B cell (primary cell): ENCODE measurements at regions of chr1 and their contacts with region 1.

Region 1: GRCh38 chr1:203340112-203340804 is 10.7 kb downstream of the FMOD start:
- DNase-seq: peak; percentile 82
- ATAC-seq: peak; percentile 77
- H3K4me3 ChIP-seq: no peak overlapping the region
- H3K4me3 Mint-ChIP-seq: no peak overlapping the region
- H3K27ac ChIP-seq: no peak overlapping the region
- H3K27ac Mint-ChIP-seq: peak overlapping the region; percentile 50
- H3K4me1 ChIP-seq: peaks cover 16 to 25% of the 10 kb centered on the region in 2 donors
- H3K4me1 Mint-ChIP-seq: peaks cover 24% of the 10 kb centered on the region
- H3K27me3 ChIP-seq: peaks cover 0 to 13% (median 1%) of the 10 kb centered on the region in 4 experiments
- H3K27me3 Mint-ChIP-seq: peaks cover 28% of the 10 kb centered on the region
- CTCF ChIP-seq: peak; percentile 95

Region 2: GRCh38 chr1:203267347-203267846 is 72.9 kb before region 1 on chr1:
- CTCF ChIA-PET with region 1: interaction called, 1,776 read pairs
- POLR2A ChIA-PET with region 1: interaction called, 14 read pairs
- intact Hi-C with region 1: loop called (anchors 1 kb)
- DNase-seq: peak; percentile 92
- ATAC-seq: peak; percentile 63
- H3K4me3 ChIP-seq: peak overlapping the region; percentile 58 to 77 (median 65)
- H3K4me3 Mint-ChIP-seq: peak overlapping the region; percentile 89
- H3K27ac ChIP-seq: peak overlapping the region; percentile 45 to 58
- H3K27ac Mint-ChIP-seq: peak overlapping the region; percentile 76
- H3K4me1 ChIP-seq: peaks cover 30 to 40% of the 10 kb centered on the region in 2 donors
- H3K4me1 Mint-ChIP-seq: peaks cover 32% of the 10 kb centered on the region
- H3K27me3 ChIP-seq: no peaks in the 10 kb centered on the region
- H3K27me3 Mint-ChIP-seq: no peaks in the 10 kb centered on the region
- CTCF ChIP-seq: peak; percentile 92

Region 3: DNA sequence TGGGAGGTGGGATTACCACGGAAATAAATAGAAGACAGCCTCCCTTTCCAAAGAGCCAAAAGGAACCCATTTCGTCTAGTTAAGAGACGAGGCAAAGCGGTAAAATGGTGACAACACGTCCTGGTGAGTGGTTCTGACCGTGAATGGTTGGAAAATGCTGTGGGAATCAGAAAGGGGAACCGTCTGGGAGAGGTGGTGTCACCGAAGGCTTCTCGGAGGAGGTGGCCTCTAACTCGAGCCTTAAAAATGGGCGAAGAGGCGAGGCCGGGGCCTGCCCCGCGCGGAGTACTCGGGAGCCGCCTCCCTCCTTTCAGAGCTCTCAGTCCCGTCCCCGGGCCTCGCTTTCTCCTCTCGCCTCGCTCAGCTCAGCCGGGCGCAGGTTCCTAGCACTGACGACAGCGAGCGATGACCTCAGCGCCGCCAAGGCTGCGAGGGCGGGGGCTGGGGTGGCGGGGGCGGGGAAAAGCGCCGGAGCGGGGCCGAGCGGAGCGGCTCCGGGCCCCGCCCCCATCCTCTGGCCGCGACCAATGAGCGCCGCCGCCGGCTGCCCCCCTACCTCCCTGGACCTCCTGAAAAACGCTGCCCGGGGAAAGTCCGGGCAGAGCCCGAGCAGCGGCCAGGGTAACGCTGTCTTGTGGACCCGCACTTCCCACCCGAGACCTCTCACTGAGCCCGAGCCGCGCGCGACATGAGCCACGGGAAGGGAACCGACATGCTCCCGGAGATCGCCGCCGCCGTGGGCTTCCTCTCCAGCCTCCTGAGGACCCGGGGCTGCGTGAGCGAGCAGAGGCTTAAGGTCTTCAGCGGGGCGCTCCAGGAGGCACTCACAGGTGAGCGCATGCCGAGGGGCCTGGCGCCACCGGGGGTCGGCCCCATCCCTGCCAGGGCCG is 35.1 kb before region 1 on chr1 and contains the start of gene BTG2:
- CTCF ChIA-PET with region 1: interaction called, 307 read pairs
- POLR2A ChIA-PET with region 1: interaction called, 122 read pairs
- intact Hi-C with region 1: loop called (anchors 1 kb)
- DNase-seq: peak; percentile 96
- ATAC-seq: peak; percentile 80
- H3K4me3 ChIP-seq: peak within 1 kb of the TSS; percentile 96 to 99 (median 99)
- H3K4me3 Mint-ChIP-seq: peak within 1 kb of the TSS; percentile 99
- H3K27ac ChIP-seq: peak within 1 kb of the TSS; percentile 100
- H3K27ac Mint-ChIP-seq: peak within 1 kb of the TSS; percentile 99
- H3K4me1 ChIP-seq: peaks cover 65 to 78% of the 10 kb centered on the region in 2 donors
- H3K4me1 Mint-ChIP-seq: peaks cover 70% of the 10 kb centered on the region
- H3K27me3 ChIP-seq: no peaks in the 10 kb centered on the region
- H3K27me3 Mint-ChIP-seq: no peaks in the 10 kb centered on the region
- CTCF ChIP-seq: no peak
- total RNA-seq, gene BTG2: 505 and 508 TPM in 2 replicates

Region 4: DNA sequence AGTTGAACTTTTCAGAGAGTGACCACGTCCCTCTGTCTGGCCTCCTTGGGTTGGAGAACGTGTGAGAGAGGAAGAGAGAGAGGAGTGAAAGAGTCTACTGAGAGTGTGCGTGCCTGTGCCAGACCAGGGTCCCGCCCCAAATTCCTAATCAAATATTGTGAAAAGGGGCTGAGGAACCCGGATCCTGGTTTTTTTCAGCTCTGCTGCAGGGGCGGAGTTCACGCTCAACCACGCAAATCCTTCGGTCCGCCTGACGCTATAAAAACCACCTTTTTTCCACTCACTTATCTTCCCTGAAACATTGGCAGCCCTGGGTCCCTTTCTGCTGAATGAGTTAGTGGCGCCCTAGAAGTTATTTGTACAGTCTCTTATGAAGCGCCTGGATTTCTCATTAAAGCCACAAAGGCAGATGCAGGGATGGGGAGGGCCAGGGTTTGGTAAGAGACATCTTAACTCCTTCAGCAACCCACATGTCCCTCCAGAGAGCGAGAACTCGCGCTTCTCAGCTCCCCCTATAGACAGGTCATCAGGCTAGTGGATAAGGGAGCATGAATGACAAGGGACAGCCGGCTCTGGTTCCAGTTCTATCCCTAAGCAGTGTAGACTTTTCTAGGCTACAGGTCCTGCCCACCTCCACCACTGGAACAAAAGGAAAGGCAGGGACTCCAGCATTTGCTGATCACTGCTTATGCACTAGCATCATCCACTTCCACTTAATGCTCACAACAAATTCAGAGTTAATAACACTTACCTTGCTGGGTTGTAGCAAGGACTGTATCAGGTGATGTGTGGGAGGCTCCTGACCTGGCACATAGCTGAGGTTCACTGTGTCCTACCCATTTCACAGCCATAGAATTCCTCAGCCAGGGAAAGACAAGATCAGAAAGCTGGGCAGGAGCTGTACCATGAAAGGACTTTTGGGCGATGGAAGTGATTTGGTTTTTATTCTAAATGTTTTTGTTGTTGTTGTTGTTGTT is 11.1 kb after region 1 on chr1 and contains the start of gene FMOD:
- CTCF ChIA-PET with region 1: interaction called, 83 read pairs
- POLR2A ChIA-PET with region 1: no interaction called
- intact Hi-C with region 1: no loop called
- DNase-seq: peak; percentile 32
- ATAC-seq: no peak
- H3K4me3 ChIP-seq: no peak within 1 kb of the TSS
- H3K4me3 Mint-ChIP-seq: no peak within 1 kb of the TSS
- H3K27ac ChIP-seq: no peak within 1 kb of the TSS
- H3K27ac Mint-ChIP-seq: no peak within 1 kb of the TSS
- H3K4me1 ChIP-seq: peaks cover 6 to 10% of the 10 kb centered on the region in 2 donors
- H3K4me1 Mint-ChIP-seq: peaks cover 3% of the 10 kb centered on the region
- H3K27me3 ChIP-seq: peaks cover 0 to 32% (median 5%) of the 10 kb centered on the region in 4 experiments
- H3K27me3 Mint-ChIP-seq: peaks cover 38% of the 10 kb centered on the region
- CTCF ChIP-seq: no peak
- total RNA-seq, gene FMOD: not detected in 2 replicates

Region 5: GRCh38 chr1:203440771-203441170 is 100.5 kb after region 1 on chr1:
- CTCF ChIA-PET with region 1: interaction called, 187 read pairs
- POLR2A ChIA-PET with region 1: interaction called, 6 read pairs
- intact Hi-C with region 1: loop called (anchors 1 kb)
- DNase-seq: peak; percentile 38
- ATAC-seq: peak; percentile 39
- H3K4me3 ChIP-seq: no peak overlapping the region
- H3K4me3 Mint-ChIP-seq: no peak overlapping the region
- H3K27ac ChIP-seq: no peak overlapping the region
- H3K27ac Mint-ChIP-seq: no peak overlapping the region
- H3K4me1 ChIP-seq: no peaks in the 10 kb centered on the region
- H3K4me1 Mint-ChIP-seq: no peaks in the 10 kb centered on the region
- H3K27me3 ChIP-seq: peaks cover 0 to 15% (median 0%) of the 10 kb centered on the region in 4 experiments
- H3K27me3 Mint-ChIP-seq: peaks cover 24% of the 10 kb centered on the region
- CTCF ChIP-seq: no peak

Region 6: DNA sequence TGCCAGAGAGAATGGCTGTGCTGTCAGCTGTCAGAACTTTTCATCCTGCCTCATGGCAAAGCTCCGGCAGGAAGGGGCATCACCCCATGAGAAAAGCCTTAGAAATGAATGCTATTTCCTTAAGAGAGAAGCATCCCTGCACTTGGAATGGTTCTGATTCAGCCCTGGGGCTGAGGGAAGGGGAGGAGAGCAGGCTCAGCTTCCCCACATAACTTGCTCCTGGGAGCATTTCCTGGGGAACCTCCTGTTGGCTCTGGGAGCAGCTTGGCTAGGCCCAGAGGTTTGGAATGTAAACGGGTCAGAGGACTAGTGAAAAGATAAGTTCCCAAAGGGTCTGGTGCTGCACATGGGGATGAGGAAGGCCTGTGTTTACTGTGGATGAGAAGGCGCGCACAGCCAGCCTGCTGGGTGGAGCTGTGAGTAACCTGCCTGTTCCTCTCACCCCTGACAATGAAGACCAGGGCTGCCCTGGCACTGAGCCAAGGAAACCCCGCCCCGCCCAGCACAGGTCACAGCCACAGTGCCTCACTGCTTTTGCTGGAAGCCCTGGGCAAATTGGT is 140.3 kb after region 1 on chr1:
- CTCF ChIA-PET with region 1: interaction called, 511 read pairs
- POLR2A ChIA-PET with region 1: no interaction called
- intact Hi-C with region 1: no loop called
- DNase-seq: peak; percentile 37
- ATAC-seq: no peak
- H3K4me3 ChIP-seq: no peak overlapping the region
- H3K4me3 Mint-ChIP-seq: no peak overlapping the region
- H3K27ac ChIP-seq: no peak overlapping the region
- H3K27ac Mint-ChIP-seq: no peak overlapping the region
- H3K4me1 ChIP-seq: peaks cover 4% of the 10 kb centered on the region in 2 donors
- H3K4me1 Mint-ChIP-seq: peaks cover 17% of the 10 kb centered on the region
- H3K27me3 ChIP-seq: no peaks in the 10 kb centered on the region
- H3K27me3 Mint-ChIP-seq: peaks cover 8% of the 10 kb centered on the region
- CTCF ChIP-seq: no peak

Region 7: DNA sequence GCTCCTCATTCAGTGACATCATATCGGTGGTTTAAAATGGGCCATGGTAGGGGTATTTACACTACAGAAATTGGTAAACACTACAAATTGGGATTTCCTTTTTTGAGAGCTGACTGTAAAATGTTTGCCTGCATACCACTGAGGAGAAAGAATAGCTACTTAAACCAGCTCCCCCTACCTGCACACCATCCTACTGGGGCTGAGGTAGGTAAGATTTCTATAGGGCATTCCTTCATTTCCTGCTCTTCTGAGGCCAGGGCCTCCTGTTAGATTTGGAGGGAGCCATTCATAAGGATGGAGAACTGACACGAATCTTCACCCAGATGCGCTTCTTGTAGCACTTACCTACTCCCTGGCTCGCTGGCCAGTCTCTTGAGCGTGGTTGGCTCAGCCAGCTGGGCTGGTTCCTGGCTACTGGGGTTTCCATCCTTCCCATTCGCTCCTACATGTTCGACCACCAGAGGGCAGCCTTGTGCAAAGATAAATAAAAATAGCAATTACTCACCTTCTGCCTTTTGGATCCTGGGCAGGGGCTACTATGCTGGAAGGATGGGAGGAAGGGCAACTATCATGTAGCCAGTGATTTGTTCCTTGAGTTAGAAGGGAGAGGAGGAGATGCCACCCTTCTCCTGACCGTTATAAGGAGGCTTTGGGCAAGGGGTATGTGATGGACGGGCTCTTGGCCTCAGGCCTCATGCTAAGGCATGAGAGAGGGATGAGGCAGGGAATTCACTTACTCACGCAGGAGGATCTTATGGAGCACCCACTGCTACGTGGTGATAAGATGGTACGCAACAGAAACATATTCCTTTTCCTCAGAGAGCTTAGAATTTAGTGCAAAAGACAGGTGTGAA is 164.4 kb after region 1 on chr1:
- CTCF ChIA-PET with region 1: interaction called, 48 read pairs
- POLR2A ChIA-PET with region 1: no interaction called
- intact Hi-C with region 1: no loop called
- DNase-seq: peak; percentile 80
- ATAC-seq: peak; percentile 72
- H3K4me3 ChIP-seq: no peak overlapping the region
- H3K4me3 Mint-ChIP-seq: no peak overlapping the region
- H3K27ac ChIP-seq: no peak overlapping the region
- H3K27ac Mint-ChIP-seq: no peak overlapping the region
- H3K4me1 ChIP-seq: no peaks in the 10 kb centered on the region
- H3K4me1 Mint-ChIP-seq: peaks cover 2% of the 10 kb centered on the region
- H3K27me3 ChIP-seq: peaks cover 0 to 7% (median 0%) of the 10 kb centered on the region in 4 experiments
- H3K27me3 Mint-ChIP-seq: peaks cover 16% of the 10 kb centered on the region
- CTCF ChIP-seq: peak; percentile 93

Region 8: GRCh38 chr1:203537806-203538464 is 197.7 kb after region 1 on chr1:
- CTCF ChIA-PET with region 1: no interaction called
- POLR2A ChIA-PET with region 1: no interaction called
- intact Hi-C with region 1: no loop called
- DNase-seq: no peak
- ATAC-seq: no peak
- H3K4me3 ChIP-seq: no peak overlapping the region
- H3K4me3 Mint-ChIP-seq: no peak overlapping the region
- H3K27ac ChIP-seq: no peak overlapping the region
- H3K27ac Mint-ChIP-seq: no peak overlapping the region
- H3K4me1 ChIP-seq: no peaks in the 10 kb centered on the region
- H3K4me1 Mint-ChIP-seq: no peaks in the 10 kb centered on the region
- H3K27me3 ChIP-seq: no peaks in the 10 kb centered on the region
- H3K27me3 Mint-ChIP-seq: peaks cover 16% of the 10 kb centered on the region
- CTCF ChIP-seq: no peak

Region 9: GRCh38 chr1:203720262-203720661 is 380.0 kb after region 1 on chr1:
- CTCF ChIA-PET with region 1: no interaction called
- POLR2A ChIA-PET with region 1: no interaction called
- intact Hi-C with region 1: no loop called
- DNase-seq: no peak
- ATAC-seq: no peak
- H3K4me3 ChIP-seq: no peak overlapping the region
- H3K4me3 Mint-ChIP-seq: no peak overlapping the region
- H3K27ac ChIP-seq: no peak overlapping the region
- H3K27ac Mint-ChIP-seq: no peak overlapping the region
- H3K4me1 ChIP-seq: no peaks in the 10 kb centered on the region
- H3K4me1 Mint-ChIP-seq: no peaks in the 10 kb centered on the region
- H3K27me3 ChIP-seq: no peaks in the 10 kb centered on the region
- H3K27me3 Mint-ChIP-seq: no peaks in the 10 kb centered on the region
- CTCF ChIP-seq: no peak